Ascending aorta (tissue), 2 donors: ENCODE measurements at regions of chr16 and their contacts with region 1.

Region 1: GRCh38 chr16:11255737-11256660 is at the start of gene SOCS1:
- DNase-seq: peak; percentile 43 to 89
- H3K4me3 ChIP-seq: peak within 1 kb of the TSS; percentile 79 to 80
- H3K27ac ChIP-seq: peak within 1 kb of the TSS; percentile 90 to 96
- H3K4me1 ChIP-seq: peaks cover 10 to 25% of the 10 kb centered on the region in 2 donors
- H3K27me3 ChIP-seq: no peaks in the 10 kb centered on the region
- CTCF ChIP-seq: peak; percentile 84 to 97 (median 88)
- total RNA-seq, gene SOCS1: 1.8 TPM

Region 2: GRCh38 chr16:10971560-10971961 is 284.4 kb before region 1 on chr16:
- intact Hi-C with region 1: loop called (anchors 1 kb)
- DNase-seq: peak in 1 of 2 donors; percentile 74
- H3K4me3 ChIP-seq: no peak overlapping the region
- H3K27ac ChIP-seq: peak overlapping the region; percentile 72 to 89
- H3K4me1 ChIP-seq: peaks cover 10 to 24% of the 10 kb centered on the region in 2 donors
- H3K27me3 ChIP-seq: no peaks in the 10 kb centered on the region
- CTCF ChIP-seq: peak; percentile 63 to 83 (median 71)

Region 3: DNA sequence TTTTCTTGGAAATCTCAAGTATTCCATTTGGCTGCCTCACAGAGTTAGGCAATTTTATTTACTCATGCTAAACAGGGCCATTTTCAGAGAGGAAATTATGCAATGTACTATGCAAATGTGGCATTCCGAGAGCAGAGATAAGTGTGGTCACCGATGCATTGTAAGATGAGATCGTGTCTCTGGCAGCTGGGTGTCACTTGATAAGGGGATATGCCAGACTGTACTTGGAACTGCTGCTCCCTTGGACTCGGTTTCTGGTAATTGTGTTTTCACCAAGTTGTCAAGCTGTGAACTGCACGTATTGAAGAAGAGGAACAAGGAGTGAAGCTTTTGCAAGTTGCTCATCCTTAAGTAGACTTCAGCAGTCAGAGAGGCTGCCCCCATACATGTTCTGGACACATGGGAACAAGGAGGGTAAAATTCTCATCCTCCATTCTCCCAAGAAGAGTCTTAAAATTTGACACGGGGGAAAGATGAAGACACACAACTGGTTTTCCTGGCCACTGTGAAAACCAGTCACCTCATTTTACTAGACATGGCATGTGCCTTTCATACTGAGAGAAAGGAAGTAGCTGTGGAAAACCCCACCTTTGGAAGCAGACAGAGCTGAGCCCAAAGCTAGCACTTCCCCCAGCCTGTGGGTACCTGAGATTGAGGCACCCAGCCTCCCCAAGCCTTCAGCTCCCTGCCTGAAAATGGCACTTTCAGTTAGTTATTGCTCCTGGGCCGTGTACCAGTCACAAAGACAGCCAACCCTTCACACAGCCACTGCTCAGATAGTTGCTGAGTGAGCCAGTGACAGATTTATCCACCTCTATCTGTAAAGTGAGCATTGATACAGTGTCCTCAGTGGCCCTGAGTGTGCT is 150.7 kb before region 1 on chr16:
- intact Hi-C with region 1: loop called (anchors 5 kb)
- DNase-seq: peak in 1 of 2 donors; percentile 79
- H3K4me3 ChIP-seq: peak overlapping the region in 1 of 2 donors; percentile 18
- H3K27ac ChIP-seq: peak overlapping the region; percentile 31 to 83
- H3K4me1 ChIP-seq: peaks cover 26 to 54% of the 10 kb centered on the region in 2 donors
- H3K27me3 ChIP-seq: no peaks in the 10 kb centered on the region
- CTCF ChIP-seq: no peak

Region 4: DNA sequence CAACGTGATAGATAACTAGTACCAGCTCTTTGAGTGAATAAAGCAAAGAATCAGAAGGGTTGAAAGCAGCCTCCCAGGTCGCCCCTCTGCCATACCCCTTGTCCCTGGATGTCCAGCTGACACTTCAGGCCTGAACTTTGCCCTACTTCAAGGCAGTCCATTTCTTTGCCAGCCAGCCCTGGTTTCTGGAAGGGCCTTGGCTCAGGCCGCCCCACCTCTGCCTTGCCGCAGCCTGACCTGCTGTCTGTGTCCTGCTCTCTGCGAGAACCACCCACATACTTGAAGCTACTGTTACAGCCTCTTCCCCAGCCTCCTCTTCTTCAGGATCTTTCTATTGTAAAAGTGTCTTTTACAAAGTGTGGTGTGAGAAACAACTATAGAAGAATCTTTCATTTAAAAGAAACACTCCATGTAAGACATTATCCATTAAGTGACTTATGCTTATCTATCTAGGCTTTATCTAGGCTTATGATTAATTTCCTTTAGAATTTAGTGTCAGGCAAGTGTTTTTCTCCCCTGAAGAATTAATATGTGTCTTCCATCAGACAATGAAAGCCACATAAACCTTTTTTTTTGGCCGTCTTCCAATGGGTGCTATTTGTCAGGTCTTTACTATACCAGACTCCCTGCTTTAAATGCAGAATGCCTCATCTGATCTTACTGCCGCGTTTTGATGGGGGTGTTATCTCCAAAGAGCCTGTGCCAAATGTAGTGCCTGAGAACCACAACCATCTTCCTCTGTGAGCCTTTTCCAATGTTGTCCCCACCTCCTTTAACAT is 133.9 kb before region 1 on chr16:
- intact Hi-C with region 1: no loop called
- DNase-seq: no peak
- H3K4me3 ChIP-seq: no peak overlapping the region
- H3K27ac ChIP-seq: peak overlapping the region; percentile 37 to 73
- H3K4me1 ChIP-seq: peaks cover 0 to 16% of the 10 kb centered on the region in 2 donors
- H3K27me3 ChIP-seq: no peaks in the 10 kb centered on the region
- CTCF ChIP-seq: no peak

Region 5: DNA sequence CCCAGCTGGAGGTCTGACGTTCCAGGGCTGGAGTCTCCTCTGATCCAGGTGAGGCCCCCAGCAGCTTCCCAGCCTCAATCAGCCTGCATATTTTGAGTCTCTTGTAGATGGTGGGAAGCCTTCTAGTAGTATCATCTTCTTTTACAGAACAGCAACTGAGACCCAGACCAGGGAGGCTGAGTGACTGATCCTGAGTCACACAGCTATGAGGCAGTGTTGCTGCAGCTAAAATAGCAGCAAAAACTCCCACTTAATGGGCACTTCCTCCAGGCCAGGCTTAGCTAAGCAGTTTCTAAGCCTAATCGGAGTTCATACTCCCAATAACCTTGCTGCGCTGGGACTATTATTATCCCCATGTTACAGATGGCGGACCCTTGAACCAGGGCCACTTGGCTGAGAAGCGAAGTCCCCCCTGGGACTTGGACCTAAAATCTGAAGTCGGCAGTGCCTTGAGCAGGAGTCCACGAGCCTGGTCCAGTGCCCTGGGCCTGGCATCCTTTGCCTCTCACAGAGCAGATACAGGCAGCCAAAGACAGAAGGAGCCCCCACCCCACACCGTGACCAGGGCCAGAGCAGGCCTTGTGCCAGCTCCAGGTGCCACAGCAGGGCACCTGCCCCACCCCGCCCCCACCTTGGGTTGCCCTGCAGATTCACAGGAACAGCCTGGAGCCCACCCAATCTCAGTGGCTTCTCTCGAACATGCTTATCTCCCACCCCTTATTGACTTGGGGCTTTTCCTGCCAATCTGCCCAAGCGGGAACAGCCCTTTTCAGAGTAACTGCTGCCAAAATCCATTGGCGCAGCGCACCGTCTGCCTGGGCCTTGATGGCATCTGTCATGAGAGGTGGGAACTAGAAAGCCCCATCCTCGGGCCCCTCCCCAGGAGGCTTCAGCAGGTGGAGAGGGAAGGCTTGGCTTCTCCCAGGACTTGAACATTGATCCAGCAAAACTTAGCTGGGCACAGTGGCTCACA is 65.1 kb before region 1 on chr16:
- intact Hi-C with region 1: no loop called
- DNase-seq: no peak
- H3K4me3 ChIP-seq: no peak overlapping the region
- H3K27ac ChIP-seq: peak overlapping the region in 1 of 2 donors; percentile 31
- H3K4me1 ChIP-seq: peaks cover 11 to 14% of the 10 kb centered on the region in 2 donors
- H3K27me3 ChIP-seq: no peaks in the 10 kb centered on the region
- CTCF ChIP-seq: no peak

Region 6: DNA sequence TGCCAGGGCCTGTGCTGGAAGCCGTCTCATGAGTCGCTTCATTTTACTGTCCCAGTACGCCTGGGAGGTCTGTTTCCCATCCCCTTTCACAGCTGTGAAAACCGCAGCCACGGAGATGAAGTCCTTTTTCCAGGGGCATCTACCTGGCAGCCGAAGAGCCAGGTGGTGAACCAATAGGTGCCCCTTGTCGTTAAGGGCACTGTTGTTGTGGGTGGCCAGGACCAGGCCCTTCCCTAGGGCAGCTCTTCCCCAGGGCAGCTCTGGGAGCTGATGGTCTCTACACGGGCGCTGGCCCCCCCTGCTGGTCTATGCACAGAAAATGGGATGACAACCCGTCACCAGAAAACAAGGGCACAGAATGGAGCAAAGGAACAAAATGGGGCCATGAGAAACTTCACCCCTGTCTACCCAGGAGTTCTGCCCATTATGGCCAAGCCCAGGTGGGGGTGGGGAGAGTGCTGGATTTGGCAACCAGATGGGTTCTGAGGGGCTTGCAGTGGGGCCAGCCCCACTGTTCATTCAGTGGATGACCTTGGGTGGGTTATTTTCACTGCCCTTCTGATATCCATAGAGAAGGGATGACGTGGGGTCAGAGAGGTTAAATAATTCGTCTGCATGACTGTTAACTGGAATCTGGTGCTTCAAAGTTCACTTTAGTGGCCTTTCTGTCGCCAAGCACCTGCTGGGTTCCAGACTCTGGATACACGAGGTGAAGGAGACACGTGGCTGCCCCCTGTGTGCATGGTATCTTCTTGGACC is 100.8 kb after region 1 on chr16:
- intact Hi-C with region 1: loop called (anchors 2 kb)
- DNase-seq: no peak
- H3K4me3 ChIP-seq: no peak overlapping the region
- H3K27ac ChIP-seq: peak overlapping the region; percentile 73 to 75
- H3K4me1 ChIP-seq: peaks cover 3 to 12% of the 10 kb centered on the region in 2 donors
- H3K27me3 ChIP-seq: no peaks in the 10 kb centered on the region
- CTCF ChIP-seq: peak; percentile 24 to 51 (median 42)

Region 7: DNA sequence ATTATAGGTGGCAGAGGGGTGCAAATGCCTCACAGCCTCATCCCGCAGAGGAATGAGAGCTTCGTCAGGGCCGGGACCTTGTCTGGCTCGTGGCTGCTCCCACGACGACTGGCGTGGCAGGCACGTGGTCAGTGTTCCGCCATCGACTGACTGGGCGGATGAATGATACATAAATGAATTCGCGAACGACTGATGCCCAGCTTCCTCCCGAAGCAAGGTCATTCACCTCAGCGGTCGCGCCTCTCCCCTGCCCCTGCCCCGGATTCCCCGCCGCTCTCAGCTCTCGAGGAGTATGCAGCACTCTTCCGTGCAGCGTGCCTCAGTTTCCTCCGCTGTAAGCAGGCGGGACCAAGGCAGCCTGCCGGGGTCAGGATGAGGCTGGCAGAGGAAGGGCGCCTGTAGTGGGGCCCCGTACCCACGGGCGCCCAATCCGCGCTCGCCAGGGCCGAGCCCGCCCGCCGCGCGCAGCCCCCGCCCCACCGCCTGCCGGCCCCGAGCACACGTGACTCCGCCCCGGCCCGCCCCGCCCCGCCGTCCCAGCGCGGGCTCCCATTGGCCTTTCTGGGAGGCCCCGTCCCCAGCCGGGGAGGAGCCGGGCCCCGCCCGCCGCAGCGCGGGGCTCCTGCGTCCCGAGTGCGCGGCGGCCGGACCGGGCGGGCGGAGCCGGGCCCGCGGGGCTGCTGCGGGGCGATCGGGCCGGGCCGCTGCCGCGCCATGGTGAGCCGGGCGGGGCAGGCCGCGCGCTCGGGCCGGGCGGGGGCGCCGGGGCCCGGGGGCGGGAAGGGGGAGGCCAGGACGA is 412.0 kb after region 1 on chr16 and contains the start of gene SNN:
- intact Hi-C with region 1: loop called (anchors 10 kb)
- DNase-seq: peak; percentile 52 to 93
- H3K4me3 ChIP-seq: peak within 1 kb of the TSS; percentile 95 to 98
- H3K27ac ChIP-seq: peak within 1 kb of the TSS; percentile 78 to 81
- H3K4me1 ChIP-seq: peaks cover 9 to 34% of the 10 kb centered on the region in 2 donors
- H3K27me3 ChIP-seq: no peaks in the 10 kb centered on the region
- CTCF ChIP-seq: no peak
- total RNA-seq, gene SNN: 2.1 TPM